Activated CD4-positive, alpha-beta memory T cell treated with anti-CD3 and anti-CD28 coated beads for 36 hours (primary cell): ENCODE measurements at regions of chr14 and their contacts with region 1.

Region 1: DNA sequence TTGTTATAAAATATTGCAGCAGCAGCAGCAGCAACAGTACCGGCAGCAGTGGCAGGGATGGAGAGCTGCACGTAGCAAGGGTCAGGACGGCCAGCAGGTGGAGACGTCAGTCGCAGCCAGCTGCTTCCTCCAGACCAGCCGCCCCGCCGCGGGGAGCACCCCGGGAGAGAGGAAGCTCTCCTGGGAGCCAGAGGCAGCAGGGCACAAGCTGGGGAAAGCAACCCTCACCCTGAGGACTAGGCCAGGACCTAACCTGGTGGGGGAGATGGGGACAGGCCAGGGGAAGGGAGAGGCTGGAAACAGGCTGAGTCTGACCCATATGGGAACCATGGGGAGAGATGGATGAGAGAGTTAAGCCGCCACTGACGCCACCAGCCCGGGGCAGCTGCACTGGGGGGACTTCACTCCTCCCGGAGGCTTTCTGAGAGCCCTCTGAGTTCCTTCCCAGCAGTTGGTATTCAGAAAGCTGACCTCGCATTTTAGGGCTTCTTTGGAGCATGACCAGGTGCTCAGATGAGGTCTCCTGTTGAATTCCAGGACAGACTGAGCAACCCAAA is 56.3 kb downstream of the SPTB start:
- DNase-seq: peak; percentile 80
- H3K4me3 Mint-ChIP-seq: no peak overlapping the region
- H3K27ac Mint-ChIP-seq: no peak overlapping the region
- H3K4me1 Mint-ChIP-seq: no peaks in the 10 kb centered on the region
- H3K27me3 Mint-ChIP-seq: peaks cover 4% of the 10 kb centered on the region

Region 2: GRCh38 chr14:64671591-64671990 is 151.8 kb before region 1 on chr14:
- CTCF ChIA-PET with region 1: interaction called, 13 read pairs
- POLR2A ChIA-PET with region 1: no interaction called
- intact Hi-C with region 1: no loop called
- DNase-seq: no peak
- H3K4me3 Mint-ChIP-seq: no peak overlapping the region
- H3K27ac Mint-ChIP-seq: no peak overlapping the region
- H3K4me1 Mint-ChIP-seq: peaks cover 24% of the 10 kb centered on the region
- H3K27me3 Mint-ChIP-seq: no peaks in the 10 kb centered on the region

Region 3: GRCh38 chr14:64717870-64718269 is 105.5 kb before region 1 on chr14:
- CTCF ChIA-PET with region 1: no interaction called
- POLR2A ChIA-PET with region 1: no interaction called
- intact Hi-C with region 1: no loop called
- DNase-seq: no peak
- H3K4me3 Mint-ChIP-seq: no peak overlapping the region
- H3K27ac Mint-ChIP-seq: peak overlapping the region; percentile 74
- H3K4me1 Mint-ChIP-seq: peaks cover 84% of the 10 kb centered on the region
- H3K27me3 Mint-ChIP-seq: no peaks in the 10 kb centered on the region

Region 4: DNA sequence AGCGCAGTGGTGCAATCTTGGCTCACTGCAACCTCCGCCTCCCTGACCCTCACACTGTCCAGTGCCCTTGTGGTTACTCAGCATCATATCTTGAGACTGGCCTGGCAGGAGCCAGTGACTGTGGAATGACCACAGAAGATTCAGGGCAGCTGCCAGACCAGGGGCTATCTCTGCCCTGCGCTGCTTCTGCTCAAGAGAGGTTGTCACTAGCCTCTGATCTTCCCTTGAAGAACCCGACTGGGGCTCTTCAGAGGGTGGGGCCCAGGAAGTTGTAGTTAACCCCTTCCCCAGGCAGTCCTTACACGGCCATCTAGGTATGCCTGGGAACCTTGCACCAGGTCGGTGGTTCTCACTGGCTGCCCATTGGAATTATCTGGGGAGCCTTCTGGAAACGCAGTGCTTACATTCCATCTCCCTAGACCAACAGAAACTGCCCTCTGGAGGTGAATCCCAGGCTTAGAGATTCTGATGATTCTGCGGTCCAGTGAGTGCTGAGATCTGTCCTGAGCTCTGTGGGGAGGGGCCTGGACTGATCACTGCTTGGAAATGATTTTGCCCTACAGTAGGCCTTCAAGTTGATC is 77.8 kb before region 1 on chr14:
- CTCF ChIA-PET with region 1: no interaction called
- POLR2A ChIA-PET with region 1: no interaction called
- intact Hi-C with region 1: no loop called
- DNase-seq: no peak
- H3K4me3 Mint-ChIP-seq: no peak overlapping the region
- H3K27ac Mint-ChIP-seq: peak overlapping the region; percentile 30
- H3K4me1 Mint-ChIP-seq: peaks cover 29% of the 10 kb centered on the region
- H3K27me3 Mint-ChIP-seq: no peaks in the 10 kb centered on the region

Region 5: GRCh38 chr14:64806202-64806860 is 17.1 kb before region 1 on chr14:
- CTCF ChIA-PET with region 1: interaction called, 16 read pairs
- POLR2A ChIA-PET with region 1: no interaction called
- intact Hi-C with region 1: no loop called
- DNase-seq: no peak
- H3K4me3 Mint-ChIP-seq: no peak overlapping the region
- H3K27ac Mint-ChIP-seq: no peak overlapping the region
- H3K4me1 Mint-ChIP-seq: no peaks in the 10 kb centered on the region
- H3K27me3 Mint-ChIP-seq: peaks cover 1% of the 10 kb centered on the region

Region 6: GRCh38 chr14:64835431-64835830 is 12.0 kb after region 1 on chr14:
- CTCF ChIA-PET with region 1: interaction called, 13 read pairs
- POLR2A ChIA-PET with region 1: no interaction called
- intact Hi-C with region 1: no loop called
- DNase-seq: no peak
- H3K4me3 Mint-ChIP-seq: no peak overlapping the region
- H3K27ac Mint-ChIP-seq: no peak overlapping the region
- H3K4me1 Mint-ChIP-seq: no peaks in the 10 kb centered on the region
- H3K27me3 Mint-ChIP-seq: peaks cover 7% of the 10 kb centered on the region

Region 7: GRCh38 chr14:64899958-64900357 is 76.6 kb after region 1 on chr14:
- CTCF ChIA-PET with region 1: interaction called, 15 read pairs
- POLR2A ChIA-PET with region 1: no interaction called
- intact Hi-C with region 1: no loop called
- DNase-seq: no peak
- H3K4me3 Mint-ChIP-seq: no peak overlapping the region
- H3K27ac Mint-ChIP-seq: no peak overlapping the region
- H3K4me1 Mint-ChIP-seq: no peaks in the 10 kb centered on the region
- H3K27me3 Mint-ChIP-seq: peaks cover 3% of the 10 kb centered on the region